Activated naive CD4-positive, alpha-beta T cell treated with anti-CD3 and anti-CD28 coated beads for 36 hours (primary cell): ENCODE measurements at regions of chr18 and their contacts with region 1.

Region 1: GRCh38 chr18:35497370-35498197 is at the start of gene INO80C:
- DNase-seq: peak; percentile 93
- H3K4me3 Mint-ChIP-seq: peak within 1 kb of the TSS; percentile 96
- H3K27ac Mint-ChIP-seq: peak within 1 kb of the TSS; percentile 99
- H3K4me1 Mint-ChIP-seq: peaks cover 23% of the 10 kb centered on the region
- H3K27me3 Mint-ChIP-seq: no peaks in the 10 kb centered on the region
- total RNA-seq, gene INO80C: 34.4 to 36.6 TPM

Region 2: DNA sequence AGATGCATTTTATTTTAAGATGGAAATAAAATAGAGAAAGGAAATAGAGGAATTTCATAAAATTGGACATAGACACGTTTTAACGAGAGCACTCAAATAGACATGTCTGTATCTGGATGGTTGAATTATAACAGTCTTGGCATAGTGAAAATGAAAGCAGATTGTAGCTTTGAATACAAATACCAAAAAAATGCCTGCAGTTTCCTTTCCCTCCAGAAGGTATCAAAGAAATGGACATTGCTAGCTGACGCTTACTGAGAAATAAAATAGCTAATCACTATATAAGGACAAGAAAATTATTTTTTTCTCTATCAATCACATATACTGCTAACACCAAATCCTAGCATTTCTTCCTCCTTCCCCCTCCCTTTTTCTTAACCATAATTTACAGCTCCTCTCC is 467.8 kb before region 1 on chr18:
- CTCF ChIA-PET with region 1: no interaction called
- intact Hi-C with region 1: loop called (anchors 5 kb)
- DNase-seq: no peak
- H3K4me3 Mint-ChIP-seq: peak overlapping the region; percentile 70
- H3K27ac Mint-ChIP-seq: peak overlapping the region; percentile 92
- H3K4me1 Mint-ChIP-seq: peaks cover 61% of the 10 kb centered on the region
- H3K27me3 Mint-ChIP-seq: no peaks in the 10 kb centered on the region

Region 3: DNA sequence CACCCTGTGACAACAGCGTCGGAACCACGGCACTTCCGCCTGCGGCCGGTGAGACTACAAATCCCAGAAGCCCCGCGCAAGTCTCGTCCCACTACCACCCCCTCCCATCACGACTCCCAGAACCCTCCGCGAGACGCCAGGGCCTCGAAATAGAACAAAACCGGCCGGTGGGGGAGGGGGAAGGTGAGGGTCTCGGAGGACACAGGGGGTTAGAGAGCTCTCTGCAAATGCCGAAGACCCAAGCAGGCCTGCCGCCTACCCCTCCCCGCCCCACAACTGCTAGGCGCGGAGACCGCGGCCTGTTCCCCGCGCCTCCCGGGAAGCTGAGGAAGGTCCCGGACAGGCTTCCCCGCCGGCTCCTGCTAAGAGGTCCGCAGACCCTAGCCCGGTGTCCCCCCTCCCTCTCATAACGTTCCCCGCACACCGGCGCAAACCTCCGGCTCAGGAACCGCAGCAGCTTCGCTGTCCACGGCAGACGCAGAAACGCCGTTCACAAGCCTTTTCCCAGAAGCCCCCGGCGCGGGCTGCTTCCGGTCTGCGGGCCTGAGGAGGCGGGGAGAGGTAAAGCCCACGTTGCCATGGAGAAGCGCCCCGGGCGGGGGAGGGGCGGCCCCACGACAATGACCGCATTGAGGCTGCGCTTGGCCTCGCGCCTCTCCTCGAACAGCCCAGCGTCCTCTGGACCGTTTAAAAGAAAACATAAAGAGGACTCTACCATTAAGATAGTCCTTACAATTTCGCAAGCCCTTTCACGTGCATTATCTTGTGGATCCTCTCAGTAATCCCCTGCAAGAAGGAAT is 153.4 kb before region 1 on chr18 and contains the start of gene ZNF24:
- CTCF ChIA-PET with region 1: no interaction called
- intact Hi-C with region 1: loop called (anchors 1 kb)
- DNase-seq: peak; percentile 94
- H3K4me3 Mint-ChIP-seq: peak within 1 kb of the TSS; percentile 92
- H3K27ac Mint-ChIP-seq: peak within 1 kb of the TSS; percentile 92
- H3K4me1 Mint-ChIP-seq: peaks cover 43% of the 10 kb centered on the region
- H3K27me3 Mint-ChIP-seq: no peaks in the 10 kb centered on the region
- total RNA-seq, gene ZNF24: 46.8 to 47.8 TPM

Region 4: DNA sequence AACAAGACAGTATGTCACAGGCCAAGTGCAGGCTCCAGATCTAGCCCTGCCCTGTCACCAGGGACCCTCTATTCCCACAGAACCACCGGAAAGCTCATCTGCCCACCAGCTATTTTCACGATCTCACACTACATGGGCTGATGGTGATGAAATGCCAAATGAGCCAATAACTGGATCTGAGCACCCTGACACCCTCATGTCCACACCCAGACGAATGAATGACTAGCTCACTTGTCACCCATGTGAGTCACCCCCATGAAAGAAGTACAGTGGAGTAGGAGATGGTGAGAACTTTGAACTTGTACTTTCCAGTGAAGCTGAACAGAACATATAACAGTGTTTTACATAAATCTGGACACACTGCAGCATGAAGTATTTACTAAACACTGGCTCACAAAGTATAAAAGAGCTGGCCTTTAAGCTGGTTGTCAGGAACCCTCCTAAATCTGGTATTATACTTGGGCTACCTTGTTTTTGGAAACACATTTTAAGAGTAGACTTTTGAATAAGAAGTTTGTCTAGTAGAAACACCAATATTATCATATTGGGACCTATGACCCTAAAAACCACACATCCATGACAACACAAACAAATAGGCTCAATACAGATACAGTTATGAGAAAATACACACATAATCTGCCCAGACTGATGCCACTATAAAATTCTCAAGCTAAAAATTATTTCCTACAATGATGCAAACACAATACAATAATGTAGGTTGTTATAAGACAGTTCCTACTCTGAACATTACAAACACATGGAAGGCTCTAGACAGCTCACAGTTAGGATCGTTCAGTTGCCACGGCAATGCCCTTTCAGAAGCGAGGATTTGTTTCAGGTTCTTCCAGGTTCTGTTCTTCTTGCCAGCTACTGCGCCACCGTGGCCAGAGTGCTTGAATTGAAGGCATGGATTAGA is 18.8 kb before region 1 on chr18:
- CTCF ChIA-PET with region 1: no interaction called
- intact Hi-C with region 1: loop called (anchors 1 kb)
- DNase-seq: peak; percentile 68
- H3K4me3 Mint-ChIP-seq: peak overlapping the region; percentile 0
- H3K27ac Mint-ChIP-seq: peak overlapping the region; percentile 9
- H3K4me1 Mint-ChIP-seq: peaks cover 43% of the 10 kb centered on the region
- H3K27me3 Mint-ChIP-seq: no peaks in the 10 kb centered on the region

Region 5: GRCh38 chr18:35588995-35589394 is 91.4 kb after region 1 on chr18:
- CTCF ChIA-PET with region 1: no interaction called
- intact Hi-C with region 1: no loop called
- DNase-seq: peak; percentile 64
- H3K4me3 Mint-ChIP-seq: no peak overlapping the region
- H3K27ac Mint-ChIP-seq: no peak overlapping the region
- H3K4me1 Mint-ChIP-seq: peaks cover 34% of the 10 kb centered on the region
- H3K27me3 Mint-ChIP-seq: no peaks in the 10 kb centered on the region

Region 6: GRCh38 chr18:35616664-35617423 is 119.3 kb after region 1 on chr18:
- CTCF ChIA-PET with region 1: no interaction called
- intact Hi-C with region 1: loop called (anchors 1 kb)
- DNase-seq: peak; percentile 86
- H3K4me3 Mint-ChIP-seq: no peak overlapping the region
- H3K27ac Mint-ChIP-seq: no peak overlapping the region
- H3K4me1 Mint-ChIP-seq: peaks cover 22% of the 10 kb centered on the region
- H3K27me3 Mint-ChIP-seq: no peaks in the 10 kb centered on the region

Region 7: DNA sequence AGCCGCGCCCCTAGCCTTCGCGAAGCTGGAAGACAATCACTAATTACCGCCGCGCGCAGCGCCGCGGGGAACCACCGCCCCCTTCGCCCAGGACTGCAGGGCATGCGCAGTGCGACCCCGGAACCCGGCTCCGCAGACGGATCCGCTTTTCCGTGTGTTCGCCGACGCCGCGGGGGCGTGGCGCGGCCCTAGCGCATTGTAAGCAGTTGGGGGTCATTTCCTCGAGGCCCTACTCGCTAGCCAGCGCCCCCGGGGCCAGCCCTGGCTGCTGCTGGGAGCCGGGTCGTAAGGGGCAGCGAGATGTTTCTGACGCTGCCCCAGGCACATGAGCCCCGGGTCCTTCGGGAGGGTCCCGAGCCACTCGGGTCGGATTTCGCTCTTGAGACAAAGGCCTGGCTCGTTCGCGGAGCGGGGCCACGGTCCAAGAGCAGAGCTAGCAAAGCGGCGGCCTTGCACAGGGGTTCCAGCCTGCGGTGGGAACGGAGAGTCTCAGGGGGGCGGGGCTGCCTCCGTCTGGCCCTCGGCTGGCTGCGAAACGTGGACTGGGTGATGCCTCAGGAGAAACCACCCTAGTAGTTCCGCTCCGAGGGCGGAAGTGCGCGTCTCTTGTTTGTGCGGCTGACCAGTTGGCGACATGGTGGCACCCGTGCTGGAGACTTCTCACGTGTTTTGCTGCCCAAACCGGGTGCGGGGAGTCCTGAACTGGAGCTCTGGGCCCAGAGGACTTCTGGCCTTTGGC is 631.9 kb after region 1 on chr18 and contains the starts of genes ELP2 and SLC39A6:
- CTCF ChIA-PET with region 1: no interaction called
- intact Hi-C with region 1: loop called (anchors 1 kb)
- DNase-seq: peak; percentile 94
- H3K4me3 Mint-ChIP-seq: peak within 1 kb of the TSS; percentile 91
- H3K27ac Mint-ChIP-seq: peak within 1 kb of the TSS; percentile 92
- H3K4me1 Mint-ChIP-seq: peaks cover 61% of the 10 kb centered on the region
- H3K27me3 Mint-ChIP-seq: no peaks in the 10 kb centered on the region
- total RNA-seq, gene ELP2: 90.1 to 92.0 TPM
- total RNA-seq, gene SLC39A6: 15.4 to 15.7 TPM